Sigmoid colon (tissue), 7 donors: ENCODE measurements at regions of chr2 and their contacts with region 1.

Region 1: DNA sequence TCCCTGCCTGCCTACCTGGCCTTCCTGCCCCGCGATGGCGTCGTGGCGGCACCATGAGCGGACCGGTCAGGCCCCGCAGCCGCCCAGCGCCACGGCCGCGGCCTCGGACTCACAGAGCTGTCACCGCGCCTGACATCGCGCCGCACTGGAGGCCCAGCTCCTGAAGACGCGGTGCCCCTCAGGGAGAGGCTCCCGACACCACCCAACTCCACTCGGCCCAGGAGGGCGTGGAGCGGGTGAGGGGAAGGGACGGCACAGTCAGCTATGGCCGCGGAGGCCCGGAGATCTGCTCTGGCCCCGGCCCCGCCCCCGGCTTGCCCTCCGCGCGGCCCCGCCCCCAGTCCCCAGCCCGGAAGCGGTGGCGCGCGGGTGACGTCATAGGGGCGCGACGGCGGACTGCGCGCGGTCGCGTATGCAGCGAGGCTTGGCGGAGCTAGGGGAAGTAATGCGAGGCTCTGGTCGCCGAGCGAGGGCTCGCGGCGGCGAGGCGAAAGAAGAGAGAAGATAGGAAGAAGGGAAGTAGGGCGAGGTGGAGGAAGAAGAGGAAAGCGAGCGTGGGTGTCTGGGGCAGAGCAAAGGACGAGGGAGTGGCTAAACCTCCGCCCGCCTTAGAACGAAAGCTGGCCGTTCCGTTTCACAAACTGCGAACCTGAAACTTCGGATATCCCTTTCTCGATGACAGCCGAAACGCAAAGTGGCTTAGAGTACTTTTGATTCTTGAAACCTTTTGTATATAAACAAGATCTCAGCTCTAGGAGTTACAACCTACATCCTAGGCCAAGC is at the start of gene SLC35F5:
- DNase-seq: peak; percentile 94
- H3K4me3 ChIP-seq: peak within 1 kb of the TSS; percentile 79 to 98 (median 88)
- H3K27ac ChIP-seq: peak within 1 kb of the TSS; percentile 92 to 96 (median 95)
- H3K4me1 ChIP-seq: peaks cover 0 to 23% (median 18%) of the 10 kb centered on the region in 4 donors
- H3K27me3 ChIP-seq: no peaks in the 10 kb centered on the region
- CTCF ChIP-seq: no peak
- EP300 ChIP-seq: peak in 1 of 4 donors; percentile 29
- POLR2A ChIP-seq: peak; percentile 86 to 89
- total RNA-seq, gene SLC35F5: 54.2 to 59.7 (median 57.3) TPM

Region 2: GRCh38 chr2:113686537-113686936 is 70.0 kb before region 1 on chr2:
- intact Hi-C with region 1: no loop called
- DNase-seq: no peak
- H3K4me3 ChIP-seq: no peak overlapping the region
- H3K27ac ChIP-seq: no peak overlapping the region
- H3K4me1 ChIP-seq: no peaks in the 10 kb centered on the region
- H3K27me3 ChIP-seq: no peaks in the 10 kb centered on the region
- CTCF ChIP-seq: no peak
- EP300 ChIP-seq: no peak
- POLR2A ChIP-seq: no peak

Region 3: DNA sequence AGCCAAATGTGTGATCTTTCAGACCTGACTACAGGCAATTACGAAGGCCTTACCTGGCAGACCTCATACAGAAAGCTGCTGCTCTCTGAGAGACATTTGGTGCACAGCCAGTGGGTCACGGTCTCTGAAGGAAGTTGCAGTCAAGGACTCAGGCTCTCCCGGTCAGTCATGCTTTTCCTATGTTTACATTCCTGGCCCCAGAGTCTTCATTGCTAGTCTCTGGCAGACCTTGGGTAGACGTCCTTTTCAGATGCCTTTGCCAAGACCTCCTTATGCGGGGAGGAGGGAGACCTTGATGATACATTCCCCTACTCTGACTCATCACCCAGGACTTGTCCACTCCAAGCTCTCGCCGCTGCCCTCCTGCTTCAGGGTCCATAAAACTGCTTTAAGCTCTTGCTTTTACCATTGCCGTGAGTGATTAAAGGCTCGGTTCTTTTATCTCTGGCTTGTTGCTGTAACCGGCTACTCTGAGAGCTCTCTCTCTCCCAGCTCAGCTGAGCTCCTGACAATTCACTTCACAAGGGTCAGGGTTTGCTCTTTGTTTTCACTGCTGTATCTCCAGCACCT is 61.9 kb after region 1 on chr2:
- intact Hi-C with region 1: loop called (anchors 1 kb)
- DNase-seq: peak; percentile 86
- H3K4me3 ChIP-seq: peak overlapping the region in 2 of 4 donors; percentile 2 to 6
- H3K27ac ChIP-seq: peak overlapping the region; percentile 68 to 81 (median 70)
- H3K4me1 ChIP-seq: peaks cover 0 to 16% (median 14%) of the 10 kb centered on the region in 4 donors
- H3K27me3 ChIP-seq: no peaks in the 10 kb centered on the region
- CTCF ChIP-seq: no peak
- EP300 ChIP-seq: peak in 1 of 4 donors; percentile 38
- POLR2A ChIP-seq: no peak

Region 4: DNA sequence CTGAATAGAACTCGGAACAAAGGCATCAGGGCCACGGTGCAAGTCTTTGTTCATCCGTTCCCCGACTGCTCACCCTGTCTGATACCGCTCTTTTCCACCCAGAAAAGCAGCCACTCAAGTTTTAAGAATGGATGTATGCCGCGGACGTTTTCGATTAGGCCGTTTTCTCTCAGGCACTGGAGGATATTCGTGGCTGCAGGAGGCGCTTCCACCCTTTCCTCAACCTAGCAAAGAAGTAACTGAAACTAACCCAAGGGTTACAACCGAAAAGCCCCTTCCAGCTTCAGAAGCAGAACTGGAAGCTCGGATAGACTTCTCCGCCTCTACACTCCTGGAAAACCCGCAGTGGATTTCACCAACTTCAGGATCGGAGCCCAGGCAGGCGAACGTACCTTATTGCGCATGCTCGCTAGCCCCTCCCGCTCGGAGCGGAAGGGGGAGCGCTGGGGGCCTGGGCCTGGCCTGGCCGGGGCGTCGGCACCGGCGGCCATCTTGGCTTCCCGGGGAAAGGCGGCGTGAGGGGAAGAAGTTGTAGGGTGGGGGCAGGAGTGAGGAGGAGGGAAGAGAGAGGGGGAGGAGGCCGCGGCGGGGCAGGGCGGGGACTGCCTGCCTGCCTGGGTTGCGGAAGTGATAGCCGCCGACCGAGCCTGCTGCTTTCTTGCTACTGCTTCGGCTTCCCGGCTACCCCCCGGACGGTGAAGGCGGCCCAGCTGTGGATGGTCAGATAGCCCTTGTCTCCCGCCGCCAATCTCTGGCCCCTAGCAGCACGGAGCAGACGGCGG is 133.1 kb after region 1 on chr2 and contains the start of gene ACTR3:
- intact Hi-C with region 1: loop called (anchors 1 kb)
- DNase-seq: peak; percentile 98
- H3K4me3 ChIP-seq: peak within 1 kb of the TSS; percentile 69 to 98 (median 90)
- H3K27ac ChIP-seq: peak within 1 kb of the TSS; percentile 94 to 99 (median 98)
- H3K4me1 ChIP-seq: peaks cover 0 to 59% (median 48%) of the 10 kb centered on the region in 4 donors
- H3K27me3 ChIP-seq: no peaks in the 10 kb centered on the region
- CTCF ChIP-seq: no peak
- EP300 ChIP-seq: peak in 1 of 4 donors; percentile 44
- POLR2A ChIP-seq: peak; percentile 69 to 85
- total RNA-seq, gene ACTR3: 129 to 171 (median 142) TPM

Region 5: GRCh38 chr2:113965644-113966043 is 209.1 kb after region 1 on chr2:
- intact Hi-C with region 1: loop called (anchors 10 kb)
- DNase-seq: no peak
- H3K4me3 ChIP-seq: no peak overlapping the region
- H3K27ac ChIP-seq: no peak overlapping the region
- H3K4me1 ChIP-seq: peaks cover 0 to 21% (median 11%) of the 10 kb centered on the region in 4 donors
- H3K27me3 ChIP-seq: no peaks in the 10 kb centered on the region
- CTCF ChIP-seq: peak in 1 of 4 experiments; percentile 30
- EP300 ChIP-seq: no peak
- POLR2A ChIP-seq: no peak